ENCODE measurements at regions of chr19 and their contacts with region 1.

Region 1: DNA sequence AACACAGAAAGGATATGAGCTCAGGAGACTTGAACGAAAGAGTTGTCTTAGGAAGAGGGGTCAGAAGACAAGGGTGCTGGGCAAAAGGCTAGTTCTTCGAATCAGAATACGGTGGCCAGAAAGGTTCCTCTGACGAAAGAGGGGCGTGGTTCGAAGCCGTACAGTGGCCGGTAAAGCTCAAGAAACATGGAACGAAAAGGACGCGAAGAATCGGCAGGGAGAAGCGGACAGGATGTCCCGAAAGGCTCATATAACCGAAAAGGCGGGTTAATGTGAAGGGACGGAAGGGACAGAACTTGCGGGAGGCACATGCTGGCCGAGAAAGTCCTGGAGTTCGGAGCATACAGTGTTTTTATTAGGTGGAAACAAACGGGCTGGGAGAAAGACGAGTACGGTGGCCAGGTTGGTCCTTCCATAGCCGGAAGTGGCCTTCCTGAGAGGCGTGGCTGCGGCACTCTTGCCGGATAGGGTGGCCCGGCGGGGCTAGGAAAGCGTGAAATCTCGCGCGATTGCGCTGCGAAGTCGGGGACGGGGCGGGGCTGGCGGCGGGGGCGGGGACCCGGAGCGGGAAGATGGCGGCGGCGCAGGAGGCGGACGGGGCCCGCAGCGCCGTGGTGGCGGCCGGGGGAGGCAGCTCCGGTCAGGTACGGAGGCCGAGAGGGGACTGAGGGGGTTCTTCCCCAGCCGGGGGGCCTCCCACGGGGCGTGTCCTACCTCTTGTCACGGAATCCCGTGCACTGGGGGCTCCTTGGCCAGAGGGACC is at the start of gene CLPTM1:
- DNase-seq: peak; percentile 98
- ATAC-seq: peak; percentile 88
- H3K4me3 ChIP-seq: peak within 1 kb of the TSS; percentile 96 to 100 (median 98)
- H3K4me3 Mint-ChIP-seq: peak within 1 kb of the TSS; percentile 99
- H3K27ac ChIP-seq: peak within 1 kb of the TSS; percentile 90 to 93
- H3K27ac Mint-ChIP-seq: peak within 1 kb of the TSS; percentile 94
- H3K4me1 ChIP-seq: peaks cover 48 to 57% of the 10 kb centered on the region in 2 donors
- H3K4me1 Mint-ChIP-seq: peaks cover 58% of the 10 kb centered on the region
- H3K27me3 ChIP-seq: no peaks in the 10 kb centered on the region
- H3K27me3 Mint-ChIP-seq: no peaks in the 10 kb centered on the region
- CTCF ChIP-seq: no peak
- total RNA-seq, gene CLPTM1: 121 and 123 TPM in 2 replicates

Region 2: DNA sequence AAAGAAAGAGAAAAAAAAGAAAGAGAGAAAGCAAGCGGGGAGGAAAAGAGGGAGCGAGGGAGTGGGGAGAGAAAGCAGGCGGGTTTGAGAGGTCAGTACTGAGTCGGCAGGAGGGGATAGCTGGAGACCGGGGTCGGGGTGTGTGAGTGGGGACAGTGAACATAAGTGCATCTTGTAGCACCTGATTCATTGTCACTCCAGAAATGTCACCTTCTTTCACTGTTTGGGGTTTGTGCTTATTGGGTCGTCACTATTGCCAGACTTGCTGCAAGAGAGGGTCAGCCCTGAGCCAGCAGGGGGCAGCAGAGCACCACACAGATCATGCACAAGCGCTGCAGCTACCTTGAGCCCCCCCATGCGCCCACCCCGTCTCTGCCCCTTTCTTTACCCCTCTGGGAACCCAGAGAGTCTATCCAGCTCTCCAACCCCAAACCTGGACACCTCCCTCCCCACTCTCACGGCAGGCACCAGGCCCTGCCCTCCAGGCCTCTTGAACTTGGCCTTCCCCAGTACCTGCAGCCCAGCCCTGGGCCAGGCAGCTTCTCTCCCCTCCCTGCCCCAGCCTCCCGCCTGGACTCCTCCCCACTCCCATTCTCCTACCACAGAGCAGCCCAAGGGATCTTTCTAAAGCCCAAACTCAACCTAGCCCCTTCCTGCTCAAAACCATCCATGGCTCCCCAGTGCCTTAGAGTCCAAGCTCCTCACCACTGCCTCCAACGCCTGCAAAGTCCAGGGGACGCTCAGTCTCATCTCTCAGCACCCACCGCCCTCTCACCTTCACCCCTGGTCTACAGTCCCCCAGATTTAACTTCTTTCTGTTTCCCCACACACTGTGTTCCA is 265.7 kb before region 1 on chr19:
- CTCF ChIA-PET with region 1: interaction called, 12 read pairs
- POLR2A ChIA-PET with region 1: interaction called, 3 read pairs
- intact Hi-C with region 1: loop called (anchors 1 kb)
- DNase-seq: peak; percentile 82
- ATAC-seq: peak; percentile 54
- H3K4me3 ChIP-seq: no peak overlapping the region
- H3K4me3 Mint-ChIP-seq: no peak overlapping the region
- H3K27ac ChIP-seq: no peak overlapping the region
- H3K27ac Mint-ChIP-seq: no peak overlapping the region
- H3K4me1 ChIP-seq: peaks cover 23 to 44% of the 10 kb centered on the region in 2 donors
- H3K4me1 Mint-ChIP-seq: peaks cover 33% of the 10 kb centered on the region
- H3K27me3 ChIP-seq: peaks cover 0 to 3% (median 0%) of the 10 kb centered on the region in 4 experiments
- H3K27me3 Mint-ChIP-seq: peaks cover 13% of the 10 kb centered on the region
- CTCF ChIP-seq: peak; percentile 93

Region 3: GRCh38 chr19:44883922-44884321 is 71.1 kb before region 1 on chr19:
- CTCF ChIA-PET with region 1: no interaction called
- POLR2A ChIA-PET with region 1: no interaction called
- intact Hi-C with region 1: no loop called
- DNase-seq: no peak
- ATAC-seq: no peak
- H3K4me3 ChIP-seq: no peak overlapping the region
- H3K4me3 Mint-ChIP-seq: no peak overlapping the region
- H3K27ac ChIP-seq: no peak overlapping the region
- H3K27ac Mint-ChIP-seq: no peak overlapping the region
- H3K4me1 ChIP-seq: no peaks in the 10 kb centered on the region
- H3K4me1 Mint-ChIP-seq: peaks cover under 1% of the 10 kb centered on the region
- H3K27me3 ChIP-seq: no peaks in the 10 kb centered on the region
- H3K27me3 Mint-ChIP-seq: peaks cover 13% of the 10 kb centered on the region
- CTCF ChIP-seq: no peak

Region 4: GRCh38 chr19:44903602-44904425 is 51.2 kb before region 1 on chr19:
- CTCF ChIA-PET with region 1: interaction called, 27 read pairs
- POLR2A ChIA-PET with region 1: no interaction called
- intact Hi-C with region 1: loop called (anchors 1 kb)
- DNase-seq: peak; percentile 79
- ATAC-seq: peak; percentile 69
- H3K4me3 ChIP-seq: no peak overlapping the region
- H3K4me3 Mint-ChIP-seq: no peak overlapping the region
- H3K27ac ChIP-seq: no peak overlapping the region
- H3K27ac Mint-ChIP-seq: no peak overlapping the region
- H3K4me1 ChIP-seq: peaks cover 15 to 19% of the 10 kb centered on the region in 2 donors
- H3K4me1 Mint-ChIP-seq: peaks cover 16% of the 10 kb centered on the region
- H3K27me3 ChIP-seq: peaks cover 0 to 26% (median 10%) of the 10 kb centered on the region in 4 experiments
- H3K27me3 Mint-ChIP-seq: peaks cover 18% of the 10 kb centered on the region
- CTCF ChIP-seq: peak; percentile 98

Region 5: GRCh38 chr19:45001087-45001739 is 46.2 kb after region 1 on chr19 and contains the start of gene RELB:
- CTCF ChIA-PET with region 1: interaction called, 3 read pairs
- POLR2A ChIA-PET with region 1: interaction called, 10 read pairs
- intact Hi-C with region 1: loop called (anchors 1 kb)
- DNase-seq: peak; percentile 96
- ATAC-seq: peak; percentile 48
- H3K4me3 ChIP-seq: peak within 1 kb of the TSS in 4 of 5 experiments; percentile 75 to 95 (median 82)
- H3K4me3 Mint-ChIP-seq: peak within 1 kb of the TSS; percentile 96
- H3K27ac ChIP-seq: peak within 1 kb of the TSS; percentile 100
- H3K27ac Mint-ChIP-seq: peak within 1 kb of the TSS; percentile 97
- H3K4me1 ChIP-seq: peaks cover 13 to 15% of the 10 kb centered on the region in 2 donors
- H3K4me1 Mint-ChIP-seq: peaks cover 32% of the 10 kb centered on the region
- H3K27me3 ChIP-seq: no peaks in the 10 kb centered on the region
- H3K27me3 Mint-ChIP-seq: no peaks in the 10 kb centered on the region
- CTCF ChIP-seq: no peak
- total RNA-seq, gene RELB: 106 and 111 TPM in 2 replicates

Region 6: DNA sequence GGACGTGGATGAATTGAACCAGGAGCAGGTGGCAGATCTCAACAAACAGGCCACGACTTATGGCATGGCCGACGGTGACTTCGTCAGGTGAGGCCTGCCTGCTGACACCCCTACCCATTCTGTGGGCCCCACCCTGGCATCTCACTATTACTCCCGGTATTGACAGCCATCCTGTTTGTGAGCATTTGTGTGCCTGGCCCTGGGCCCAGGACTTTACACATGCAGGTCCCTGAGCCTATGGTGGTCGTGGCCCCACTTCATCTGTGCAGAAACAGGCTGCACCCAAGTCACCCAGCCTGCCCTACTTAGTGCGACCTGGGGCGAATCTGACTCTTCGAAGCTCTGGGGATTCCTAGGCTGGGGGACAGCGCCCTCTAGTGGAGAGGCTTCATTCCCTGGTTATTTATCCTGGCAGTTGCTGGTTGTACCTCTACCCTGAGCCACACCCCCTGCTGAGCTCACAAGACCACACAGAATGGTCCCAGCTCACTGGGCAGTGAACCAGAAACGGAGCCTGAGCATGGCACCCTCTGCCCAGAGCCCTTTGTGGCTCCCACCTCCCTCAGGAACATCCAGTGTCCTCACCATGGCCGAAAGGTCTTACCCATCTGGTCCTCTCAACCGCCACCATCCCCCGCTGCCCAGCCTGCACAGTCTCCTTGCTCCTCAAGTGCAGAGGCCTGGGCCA is 104.4 kb after region 1 on chr19:
- CTCF ChIA-PET with region 1: interaction called, 10 read pairs
- POLR2A ChIA-PET with region 1: interaction called, 4 read pairs
- intact Hi-C with region 1: no loop called
- DNase-seq: peak; percentile 90
- ATAC-seq: peak; percentile 88
- H3K4me3 ChIP-seq: no peak overlapping the region
- H3K4me3 Mint-ChIP-seq: no peak overlapping the region
- H3K27ac ChIP-seq: no peak overlapping the region
- H3K27ac Mint-ChIP-seq: peak overlapping the region; percentile 84
- H3K4me1 ChIP-seq: peaks cover 8 to 34% of the 10 kb centered on the region in 2 donors
- H3K4me1 Mint-ChIP-seq: peaks cover 40% of the 10 kb centered on the region
- H3K27me3 ChIP-seq: no peaks in the 10 kb centered on the region
- H3K27me3 Mint-ChIP-seq: no peaks in the 10 kb centered on the region
- CTCF ChIP-seq: peak; percentile 90

Region 7: GRCh38 chr19:45178262-45179071 is 223.5 kb after region 1 on chr19 and contains the start of gene BLOC1S3:
- CTCF ChIA-PET with region 1: no interaction called
- POLR2A ChIA-PET with region 1: interaction called, 5 read pairs
- intact Hi-C with region 1: loop called (anchors 1 kb)
- DNase-seq: peak; percentile 100
- ATAC-seq: peak; percentile 88
- H3K4me3 ChIP-seq: peak within 1 kb of the TSS; percentile 93 to 99 (median 95)
- H3K4me3 Mint-ChIP-seq: peak within 1 kb of the TSS; percentile 95
- H3K27ac ChIP-seq: peak within 1 kb of the TSS; percentile 86 to 91
- H3K27ac Mint-ChIP-seq: peak within 1 kb of the TSS; percentile 96
- H3K4me1 ChIP-seq: peaks cover 24 to 35% of the 10 kb centered on the region in 2 donors
- H3K4me1 Mint-ChIP-seq: peaks cover 39% of the 10 kb centered on the region
- H3K27me3 ChIP-seq: no peaks in the 10 kb centered on the region
- H3K27me3 Mint-ChIP-seq: no peaks in the 10 kb centered on the region
- CTCF ChIP-seq: peak; percentile 38
- total RNA-seq, gene BLOC1S3: 21.1 and 31.8 TPM in 2 replicates